Calu3 (cell line): ENCODE measurements at regions of chr17 and their contacts with region 1.

Region 1: DNA sequence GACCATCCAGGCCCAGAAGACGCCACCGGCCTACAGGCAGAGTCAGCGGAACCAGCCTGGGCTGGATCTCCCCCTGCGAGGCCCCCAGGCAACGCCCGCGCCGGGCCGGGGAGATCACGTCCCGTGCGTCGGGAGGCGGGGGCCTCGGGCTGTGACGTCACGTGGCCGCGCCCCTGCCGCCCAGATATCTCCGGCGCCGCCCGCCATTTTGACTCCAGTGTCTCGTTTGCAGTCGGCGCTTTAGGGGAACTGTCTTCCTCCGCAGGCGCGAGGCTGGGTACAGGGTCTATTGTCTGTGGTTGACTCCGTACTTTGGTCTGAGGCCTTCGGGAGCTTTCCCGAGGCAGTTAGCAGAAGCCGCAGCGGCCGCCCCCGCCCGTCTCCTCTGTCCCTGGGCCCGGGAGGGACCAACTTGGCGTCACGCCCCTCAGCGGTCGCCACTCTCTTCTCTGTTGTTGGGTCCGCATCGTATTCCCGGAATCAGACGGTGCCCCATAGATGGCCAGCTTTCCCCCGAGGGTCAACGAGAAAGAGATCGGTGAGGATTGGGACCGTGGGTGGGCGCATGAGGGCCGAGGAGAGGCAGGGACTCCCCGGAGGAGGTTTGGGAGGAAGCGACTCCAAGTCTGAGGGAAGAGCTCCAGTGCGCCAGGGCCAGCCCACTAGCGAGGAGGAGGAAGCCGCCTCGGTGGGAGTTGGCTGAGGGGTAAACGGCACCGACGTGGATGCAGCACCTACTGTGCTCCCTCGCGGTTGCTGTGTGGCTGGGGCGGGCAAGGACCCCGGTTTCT is at the start of gene WSB1:
- DNase-seq: peak; percentile 92
- H3K4me3 Mint-ChIP-seq: peak within 1 kb of the TSS; percentile 98
- H3K27ac Mint-ChIP-seq: peak within 1 kb of the TSS; percentile 97
- H3K4me1 Mint-ChIP-seq: peaks cover 21% of the 10 kb centered on the region
- H3K27me3 Mint-ChIP-seq: no peaks in the 10 kb centered on the region
- CTCF ChIP-seq: no peak
- total RNA-seq, gene WSB1: 60.7 and 79.7 TPM in 2 replicates

Region 2: DNA sequence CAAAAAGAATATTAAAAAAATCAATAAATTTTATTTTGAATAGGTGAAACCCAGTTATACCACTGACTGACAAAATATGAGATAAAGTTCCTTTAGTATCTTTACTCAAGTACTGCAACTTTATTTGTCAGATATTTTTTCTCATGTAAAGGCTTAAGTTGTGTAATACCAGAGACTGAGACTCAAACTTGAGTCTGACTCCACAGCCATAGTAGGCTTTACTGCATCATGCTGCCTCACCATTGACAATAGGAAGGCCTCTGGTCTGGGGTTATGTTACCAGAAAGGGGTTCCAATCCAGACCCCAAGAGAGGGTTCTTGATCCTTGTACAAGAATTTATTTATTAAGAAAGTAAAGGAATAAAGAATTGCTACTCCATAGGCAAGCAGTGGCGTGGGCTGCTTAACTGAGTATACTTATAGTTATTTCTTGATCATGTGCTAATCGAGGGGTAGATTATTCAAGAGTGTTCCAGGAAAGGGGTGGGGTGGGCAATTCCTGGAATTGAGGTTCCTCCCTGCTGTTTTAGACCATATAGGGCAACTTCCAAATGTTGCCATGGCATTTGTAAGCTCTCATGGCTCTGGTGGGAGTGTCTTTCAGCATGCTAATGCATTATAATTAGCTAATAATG is 187.6 kb before region 1 on chr17:
- CTCF ChIA-PET with region 1: no interaction called
- intact Hi-C with region 1: no loop called
- DNase-seq: no peak
- H3K4me3 Mint-ChIP-seq: no peak overlapping the region
- H3K27ac Mint-ChIP-seq: no peak overlapping the region
- H3K4me1 Mint-ChIP-seq: no peaks in the 10 kb centered on the region
- H3K27me3 Mint-ChIP-seq: no peaks in the 10 kb centered on the region
- CTCF ChIP-seq: no peak

Region 3: GRCh38 chr17:27236717-27237315 is 57.3 kb before region 1 on chr17:
- CTCF ChIA-PET with region 1: interaction called, 11 read pairs
- intact Hi-C with region 1: no loop called
- DNase-seq: peak; percentile 74
- H3K4me3 Mint-ChIP-seq: no peak overlapping the region
- H3K27ac Mint-ChIP-seq: no peak overlapping the region
- H3K4me1 Mint-ChIP-seq: peaks cover 22% of the 10 kb centered on the region
- H3K27me3 Mint-ChIP-seq: no peaks in the 10 kb centered on the region
- CTCF ChIP-seq: peak; percentile 66

Region 4: GRCh38 chr17:27245230-27245696 is 48.8 kb before region 1 on chr17:
- CTCF ChIA-PET with region 1: interaction called, 13 read pairs
- intact Hi-C with region 1: loop called (anchors 1 kb)
- DNase-seq: peak; percentile 81
- H3K4me3 Mint-ChIP-seq: peak overlapping the region; percentile 45
- H3K27ac Mint-ChIP-seq: peak overlapping the region; percentile 87
- H3K4me1 Mint-ChIP-seq: peaks cover 68% of the 10 kb centered on the region
- H3K27me3 Mint-ChIP-seq: peaks cover 5% of the 10 kb centered on the region
- CTCF ChIP-seq: peak; percentile 57

Region 5: GRCh38 chr17:27265333-27265732 is 28.8 kb before region 1 on chr17:
- CTCF ChIA-PET with region 1: interaction called, 3 read pairs
- intact Hi-C with region 1: loop called (anchors 2 kb)
- DNase-seq: peak; percentile 13
- H3K4me3 Mint-ChIP-seq: no peak overlapping the region
- H3K27ac Mint-ChIP-seq: no peak overlapping the region
- H3K4me1 Mint-ChIP-seq: peaks cover 17% of the 10 kb centered on the region
- H3K27me3 Mint-ChIP-seq: peaks cover 9% of the 10 kb centered on the region
- CTCF ChIP-seq: no peak

Region 6: GRCh38 chr17:27323524-27324206 is 29.6 kb after region 1 on chr17:
- CTCF ChIA-PET with region 1: interaction called, 6 read pairs
- intact Hi-C with region 1: loop called (anchors 2 kb)
- DNase-seq: peak; percentile 69
- H3K4me3 Mint-ChIP-seq: no peak overlapping the region
- H3K27ac Mint-ChIP-seq: peak overlapping the region; percentile 71
- H3K4me1 Mint-ChIP-seq: peaks cover 59% of the 10 kb centered on the region
- H3K27me3 Mint-ChIP-seq: no peaks in the 10 kb centered on the region
- CTCF ChIP-seq: no peak